ENCODE measurements at regions of chr14 and their contacts with region 1.

Region 1: GRCh38 chr14:96391293-96392118 is 422 bp upstream of the AK7 start:
- DNase-seq: peak; percentile 99
- H3K4me3 Mint-ChIP-seq: peak overlapping the region; percentile 85
- H3K27ac Mint-ChIP-seq: peak overlapping the region; percentile 41
- H3K4me1 Mint-ChIP-seq: peaks cover 3% of the 10 kb centered on the region
- H3K27me3 Mint-ChIP-seq: peaks cover 4% of the 10 kb centered on the region

Region 2: DNA sequence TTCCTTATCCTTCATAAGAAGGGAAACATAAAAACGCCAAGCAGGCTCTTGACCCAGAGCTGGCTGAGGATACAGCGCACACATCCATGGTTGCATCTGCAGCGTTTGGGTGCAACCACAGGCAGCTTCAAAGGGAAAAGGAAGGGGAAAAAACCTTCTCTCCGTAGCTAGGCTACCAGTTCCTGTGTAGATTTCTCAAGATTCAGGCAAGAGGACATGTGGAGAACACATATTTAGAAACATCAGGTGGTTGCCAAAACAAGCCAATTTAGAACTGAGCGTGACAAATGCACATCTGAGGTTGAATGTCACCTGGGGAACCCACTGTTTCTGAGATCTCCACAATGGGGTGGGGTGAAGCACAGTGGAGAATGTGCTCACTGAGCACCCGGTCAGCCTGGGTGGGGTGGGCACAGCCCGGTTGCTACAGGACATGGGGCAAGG is 265.1 kb before region 1 on chr14:
- CTCF ChIA-PET with region 1: no interaction called
- intact Hi-C with region 1: loop called (anchors 10 kb)
- DNase-seq: peak; percentile 73
- H3K4me3 Mint-ChIP-seq: peak overlapping the region; percentile 44
- H3K27ac Mint-ChIP-seq: peak overlapping the region; percentile 89
- H3K4me1 Mint-ChIP-seq: peaks cover 41% of the 10 kb centered on the region
- H3K27me3 Mint-ChIP-seq: no peaks in the 10 kb centered on the region

Region 3: DNA sequence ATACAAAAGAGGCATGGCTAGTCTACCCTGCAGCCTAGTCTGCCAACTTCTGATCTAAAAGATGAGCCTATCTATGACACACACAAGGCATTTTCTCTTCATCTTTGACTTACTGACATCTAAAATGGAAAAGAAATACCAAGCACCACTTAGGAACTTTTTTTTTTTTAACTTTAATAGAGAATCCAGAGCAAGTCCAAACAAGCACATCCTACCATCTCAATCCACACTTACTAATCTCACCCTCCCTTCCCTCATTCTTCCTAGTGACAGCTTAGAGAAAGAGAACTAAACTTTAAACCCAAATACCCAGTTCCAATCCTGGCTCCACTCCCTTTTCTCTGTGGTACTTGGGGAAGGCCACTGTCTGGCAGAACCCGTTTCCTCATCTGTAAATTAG is 103.7 kb before region 1 on chr14:
- CTCF ChIA-PET with region 1: no interaction called
- intact Hi-C with region 1: no loop called
- DNase-seq: no peak
- H3K4me3 Mint-ChIP-seq: no peak overlapping the region
- H3K27ac Mint-ChIP-seq: no peak overlapping the region
- H3K4me1 Mint-ChIP-seq: no peaks in the 10 kb centered on the region
- H3K27me3 Mint-ChIP-seq: no peaks in the 10 kb centered on the region

Region 4: GRCh38 chr14:96407935-96408570 is 16.5 kb after region 1 on chr14:
- CTCF ChIA-PET with region 1: no interaction called
- intact Hi-C with region 1: no loop called
- DNase-seq: no peak
- H3K4me3 Mint-ChIP-seq: no peak overlapping the region
- H3K27ac Mint-ChIP-seq: no peak overlapping the region
- H3K4me1 Mint-ChIP-seq: no peaks in the 10 kb centered on the region
- H3K27me3 Mint-ChIP-seq: no peaks in the 10 kb centered on the region

Region 5: DNA sequence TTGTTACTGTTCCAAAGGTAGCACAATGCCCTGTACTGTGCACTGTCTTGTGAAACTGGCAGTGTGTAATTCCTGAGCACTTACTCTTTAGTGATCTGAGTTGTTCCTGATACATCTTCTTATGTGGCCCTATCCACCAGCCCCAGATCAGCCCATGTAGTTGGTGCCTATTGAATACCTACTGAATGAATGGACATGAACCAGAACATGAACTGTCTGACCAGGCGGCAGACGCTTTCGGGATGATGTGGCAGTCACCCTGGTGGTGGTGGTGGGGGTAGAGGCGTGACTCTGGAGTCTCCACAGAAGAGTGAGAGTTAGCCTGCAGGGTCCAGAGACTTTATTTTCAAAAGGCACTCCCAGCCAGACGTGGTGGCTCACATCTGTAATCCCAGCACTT is 64.1 kb after region 1 on chr14:
- CTCF ChIA-PET with region 1: no interaction called
- intact Hi-C with region 1: no loop called
- DNase-seq: no peak
- H3K4me3 Mint-ChIP-seq: no peak overlapping the region
- H3K27ac Mint-ChIP-seq: no peak overlapping the region
- H3K4me1 Mint-ChIP-seq: no peaks in the 10 kb centered on the region
- H3K27me3 Mint-ChIP-seq: no peaks in the 10 kb centered on the region

Region 6: DNA sequence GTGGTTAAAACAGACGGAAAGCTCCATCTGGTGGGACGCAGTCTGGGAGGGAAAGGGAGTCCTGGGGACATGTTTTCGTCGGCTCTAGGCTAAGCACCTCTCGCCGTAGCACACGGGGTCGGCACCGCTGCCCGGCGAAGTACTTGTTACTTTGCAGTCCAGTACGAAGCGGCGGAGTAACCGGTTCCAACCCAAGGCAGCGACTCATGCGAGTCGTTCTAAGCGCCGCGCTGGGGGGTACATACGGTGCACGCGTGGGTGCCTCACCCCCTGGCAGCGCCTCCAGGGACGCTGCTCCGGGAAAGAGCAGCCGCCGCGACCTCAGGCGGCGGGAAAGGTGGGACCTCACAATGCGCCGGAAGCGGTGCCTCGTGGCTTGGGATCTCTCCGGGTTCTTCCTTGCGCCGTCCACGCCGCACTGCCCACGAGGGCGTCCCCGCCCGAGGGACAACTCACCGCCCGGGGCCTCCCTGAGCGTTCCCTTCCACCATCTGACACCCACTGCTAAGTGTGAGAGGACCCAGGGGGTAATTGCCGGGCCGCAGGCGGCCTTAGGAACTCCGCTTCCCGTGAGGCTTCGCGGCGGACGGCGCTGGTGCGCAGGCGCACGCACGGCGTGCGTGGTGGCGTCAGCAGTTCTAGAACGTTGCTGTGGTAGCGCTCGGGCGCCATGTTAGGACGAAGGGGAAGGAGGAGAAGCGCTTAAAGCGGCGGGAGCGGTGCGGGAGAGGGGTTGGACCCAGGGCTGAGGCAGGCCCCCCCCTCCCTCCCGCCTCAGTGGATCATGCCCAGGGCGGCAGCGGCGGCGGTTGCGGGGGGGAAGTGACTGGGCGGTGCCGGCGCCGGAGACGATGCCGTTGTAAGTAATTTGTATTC is 110.5 kb after region 1 on chr14 and contains the start of gene PAPOLA:
- CTCF ChIA-PET with region 1: no interaction called
- intact Hi-C with region 1: loop called (anchors 1 kb)
- DNase-seq: peak; percentile 95
- H3K4me3 Mint-ChIP-seq: peak within 1 kb of the TSS; percentile 89
- H3K27ac Mint-ChIP-seq: peak within 1 kb of the TSS; percentile 93
- H3K4me1 Mint-ChIP-seq: peaks cover 34% of the 10 kb centered on the region
- H3K27me3 Mint-ChIP-seq: no peaks in the 10 kb centered on the region
- total RNA-seq, gene PAPOLA: 162 to 181 TPM

Region 7: GRCh38 chr14:96567289-96567899 is 175.9 kb after region 1 on chr14:
- CTCF ChIA-PET with region 1: no interaction called
- intact Hi-C with region 1: no loop called
- DNase-seq: no peak
- H3K4me3 Mint-ChIP-seq: no peak overlapping the region
- H3K27ac Mint-ChIP-seq: no peak overlapping the region
- H3K4me1 Mint-ChIP-seq: no peaks in the 10 kb centered on the region
- H3K27me3 Mint-ChIP-seq: no peaks in the 10 kb centered on the region

Region 8: DNA sequence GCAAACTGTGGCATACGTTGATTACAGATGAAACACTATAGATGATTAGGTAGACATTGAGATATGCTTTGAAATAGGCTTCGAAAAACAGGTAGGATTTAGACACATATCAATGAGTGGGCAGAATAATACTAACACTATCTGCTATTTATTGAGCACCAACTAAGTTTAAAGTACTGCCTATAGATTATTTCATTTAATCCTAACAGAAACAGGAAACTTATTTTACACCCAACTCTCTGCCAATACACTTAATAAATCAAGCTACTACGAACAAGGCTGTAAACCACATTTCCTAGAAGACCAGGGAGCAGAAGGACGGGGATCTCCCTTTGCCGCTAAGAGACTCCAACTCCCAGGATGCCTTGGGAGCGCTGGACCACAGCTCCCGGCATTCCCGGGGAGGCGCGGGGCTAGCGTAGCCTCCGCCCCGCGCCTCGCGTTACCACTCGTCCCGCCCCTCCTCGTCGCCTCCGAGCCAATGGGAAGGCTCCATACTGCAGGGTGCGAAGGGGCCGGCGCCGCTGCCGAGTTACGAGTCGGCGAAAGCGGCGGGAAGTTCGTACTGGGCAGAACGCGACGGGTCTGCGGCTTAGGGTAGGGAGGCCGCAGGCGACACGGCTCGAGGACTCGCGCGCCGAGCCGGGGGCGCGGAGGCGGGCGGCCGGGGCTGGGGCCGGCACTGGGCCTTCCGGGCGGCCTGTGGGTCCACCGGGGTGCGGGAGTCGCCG is 405.5 kb after region 1 on chr14 and contains the start of gene VRK1:
- CTCF ChIA-PET with region 1: no interaction called
- intact Hi-C with region 1: loop called (anchors 5 kb)
- DNase-seq: peak; percentile 96
- H3K4me3 Mint-ChIP-seq: peak within 1 kb of the TSS; percentile 92
- H3K27ac Mint-ChIP-seq: peak within 1 kb of the TSS; percentile 84
- H3K4me1 Mint-ChIP-seq: peaks cover 20% of the 10 kb centered on the region
- H3K27me3 Mint-ChIP-seq: no peaks in the 10 kb centered on the region
- total RNA-seq, gene VRK1: 64.9 to 74.3 TPM

Region 9: GRCh38 chr14:97251491-97252155 is 860.1 kb after region 1 on chr14:
- CTCF ChIA-PET with region 1: no interaction called
- intact Hi-C with region 1: loop called (anchors 5 kb)
- DNase-seq: no peak
- H3K4me3 Mint-ChIP-seq: no peak overlapping the region
- H3K27ac Mint-ChIP-seq: no peak overlapping the region
- H3K4me1 Mint-ChIP-seq: peaks cover 12% of the 10 kb centered on the region
- H3K27me3 Mint-ChIP-seq: no peaks in the 10 kb centered on the region